IMR-90 (cell line): ENCODE measurements at regions of chr6 and their contacts with region 1.

Region 1: DNA sequence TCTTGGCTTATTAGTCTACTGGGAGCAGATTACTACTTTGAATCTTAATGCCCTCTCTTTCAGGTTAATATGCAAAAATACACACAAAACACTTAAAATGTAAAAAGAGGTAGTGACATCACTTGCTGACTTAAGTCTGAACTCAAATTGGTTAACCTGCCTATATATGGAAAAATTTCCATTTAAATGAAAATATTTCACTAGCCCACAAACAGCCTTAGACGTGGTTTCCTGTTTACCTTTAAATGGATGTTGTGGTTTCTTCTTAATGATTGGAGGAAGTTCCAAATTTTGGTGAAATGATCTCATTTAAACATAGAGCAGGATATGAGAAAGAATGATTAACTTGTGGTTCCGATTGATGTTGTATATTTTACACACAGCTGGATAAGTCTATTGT is 553.7 kb downstream of the CD109 start:
- DNase-seq: peak; percentile 96
- ATAC-seq: peak; percentile 73
- H3K4me3 ChIP-seq: no peak overlapping the region
- H3K27ac ChIP-seq: peak overlapping the region; percentile 99
- H3K4me1 ChIP-seq: peaks cover 7% of the 10 kb centered on the region
- H3K27me3 ChIP-seq: no peaks in the 10 kb centered on the region
- CTCF ChIP-seq: no peak
- POLR2A ChIP-seq: no peak
- RAD21 ChIP-seq: no peak

Region 2: GRCh38 chr6:74289884-74290283 is 40.2 kb after region 1 on chr6:
- CTCF ChIA-PET with region 1: no interaction called
- POLR2A ChIA-PET with region 1: no interaction called
- dilution Hi-C with region 1: no loop called
- in situ Hi-C with region 1: no loop called
- intact Hi-C with region 1: loop called (anchors 5 kb)
- DNase-seq: peak; percentile 97
- ATAC-seq: peak; percentile 95
- H3K4me3 ChIP-seq: no peak overlapping the region
- H3K27ac ChIP-seq: peak overlapping the region; percentile 94; the same call in 1 of the 2 replicates
- H3K4me1 ChIP-seq: peaks cover 16% of the 10 kb centered on the region
- H3K27me3 ChIP-seq: no peaks in the 10 kb centered on the region
- CTCF ChIP-seq: no peak
- POLR2A ChIP-seq: no peak
- RAD21 ChIP-seq: no peak